Body of pancreas (tissue), 4 donors: ENCODE measurements at regions of chr19 and their contacts with region 1.

Region 1: GRCh38 chr19:51339687-51340656 is 2.0 kb downstream of the VSIG10L start:
- DNase-seq: peak; percentile 95 to 98 (median 98)
- ATAC-seq: peak; percentile 94
- H3K4me3 ChIP-seq: peak overlapping the region in 1 of 2 donors; percentile 9
- H3K27ac ChIP-seq: peak overlapping the region in 3 of 4 donors; percentile 7 to 61 (median 44)
- H3K4me1 ChIP-seq: peaks cover 22% of the 10 kb centered on the region
- H3K27me3 ChIP-seq: no peaks in the 10 kb centered on the region
- CTCF ChIP-seq: peak in 2 of 7 experiments; percentile 43 to 57
- POLR2A ChIP-seq: peak in 1 of 3 donors; percentile 17

Region 2: GRCh38 chr19:51393959-51394836 is 54.2 kb after region 1 on chr19:
- intact Hi-C with region 1: loop called (anchors 10 kb)
- DNase-seq: peak; percentile 91 to 97 (median 95)
- ATAC-seq: peak; percentile 100
- H3K4me3 ChIP-seq: no peak overlapping the region
- H3K27ac ChIP-seq: peak overlapping the region in 3 of 4 donors; percentile 59 to 63 (median 60)
- H3K4me1 ChIP-seq: peaks cover 10% of the 10 kb centered on the region
- H3K27me3 ChIP-seq: no peaks in the 10 kb centered on the region
- CTCF ChIP-seq: peak in 1 of 7 experiments; percentile 15
- POLR2A ChIP-seq: no peak